ENCODE measurements at regions of chr5 and their contacts with region 1.

Region 1: DNA sequence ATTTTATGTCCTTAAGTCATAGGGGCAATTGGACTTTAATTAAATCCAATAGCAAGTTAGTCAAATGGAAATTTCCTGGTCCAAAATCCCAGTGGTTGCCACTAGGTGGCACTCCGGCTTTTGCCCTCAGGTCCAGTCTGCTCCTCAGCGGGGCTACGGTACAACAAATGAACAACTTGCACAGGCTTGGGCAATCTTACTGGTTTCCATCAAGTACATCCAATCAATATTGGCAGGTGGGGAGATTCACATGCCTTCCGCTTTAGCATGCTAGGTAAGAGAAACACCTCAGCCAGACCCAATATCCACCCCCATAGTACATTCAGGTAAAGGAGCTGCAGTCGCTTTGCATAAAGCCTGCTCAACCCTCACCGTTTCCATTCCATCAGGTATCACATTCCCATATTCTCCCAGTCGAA is 6.3 kb upstream of the MXD3 start:
- DNase-seq: peak; percentile 90
- ATAC-seq: peak; percentile 76
- H3K4me3 Mint-ChIP-seq: no peak overlapping the region
- H3K27ac Mint-ChIP-seq: no peak overlapping the region
- H3K4me1 Mint-ChIP-seq: peaks cover 20% of the 10 kb centered on the region
- H3K27me3 Mint-ChIP-seq: no peaks in the 10 kb centered on the region
- CTCF ChIP-seq: peak; percentile 94

Region 2: DNA sequence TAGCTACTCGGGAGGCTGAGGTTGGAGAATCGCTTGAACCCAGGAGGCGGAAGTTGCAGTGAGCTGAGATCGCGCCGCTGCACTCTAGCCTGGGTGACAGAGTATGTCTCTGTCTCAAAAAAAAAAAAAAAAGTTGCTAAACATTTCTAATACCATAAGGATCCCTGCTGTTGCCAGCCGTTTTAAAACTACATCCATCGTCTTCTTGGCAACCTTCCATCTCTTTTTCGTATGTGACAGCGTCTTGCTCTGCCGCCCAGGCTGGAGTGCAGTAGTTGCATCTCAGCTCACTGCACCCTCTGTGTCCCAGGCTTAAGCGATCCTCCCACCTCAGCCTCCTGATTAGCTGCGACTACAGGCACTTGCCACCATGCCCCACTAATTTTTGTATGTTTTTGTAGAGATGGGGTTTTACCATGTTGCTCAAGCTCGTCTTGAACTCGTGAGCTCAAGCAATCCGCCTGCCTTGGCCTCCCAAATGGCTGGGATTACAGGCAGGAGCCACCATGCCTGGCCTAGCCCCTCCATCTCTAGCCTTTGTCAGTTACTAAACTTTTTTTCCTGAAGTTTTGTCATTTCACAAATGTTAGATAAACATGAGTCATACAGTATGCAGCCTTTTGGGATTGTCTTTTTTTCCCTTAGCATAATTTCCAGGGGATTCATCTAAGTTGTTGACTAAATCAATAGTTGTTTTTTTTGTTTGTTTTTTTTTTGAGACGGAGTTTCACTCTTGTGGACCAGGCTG is 170.9 kb before region 1 on chr5:
- CTCF ChIA-PET with region 1: no interaction called
- POLR2A ChIA-PET with region 1: no interaction called
- intact Hi-C with region 1: no loop called
- DNase-seq: no peak
- ATAC-seq: no peak
- H3K4me3 Mint-ChIP-seq: no peak overlapping the region
- H3K27ac Mint-ChIP-seq: no peak overlapping the region
- H3K4me1 Mint-ChIP-seq: peaks cover 12% of the 10 kb centered on the region
- H3K27me3 Mint-ChIP-seq: no peaks in the 10 kb centered on the region
- CTCF ChIP-seq: no peak

Region 3: GRCh38 chr5:177290816-177291596 is 27.0 kb before region 1 on chr5:
- CTCF ChIA-PET with region 1: no interaction called
- POLR2A ChIA-PET with region 1: no interaction called
- intact Hi-C with region 1: no loop called
- DNase-seq: no peak
- ATAC-seq: no peak
- H3K4me3 Mint-ChIP-seq: no peak overlapping the region
- H3K27ac Mint-ChIP-seq: peak overlapping the region; percentile 32
- H3K4me1 Mint-ChIP-seq: peaks cover 11% of the 10 kb centered on the region
- H3K27me3 Mint-ChIP-seq: no peaks in the 10 kb centered on the region
- CTCF ChIP-seq: no peak

Region 4: DNA sequence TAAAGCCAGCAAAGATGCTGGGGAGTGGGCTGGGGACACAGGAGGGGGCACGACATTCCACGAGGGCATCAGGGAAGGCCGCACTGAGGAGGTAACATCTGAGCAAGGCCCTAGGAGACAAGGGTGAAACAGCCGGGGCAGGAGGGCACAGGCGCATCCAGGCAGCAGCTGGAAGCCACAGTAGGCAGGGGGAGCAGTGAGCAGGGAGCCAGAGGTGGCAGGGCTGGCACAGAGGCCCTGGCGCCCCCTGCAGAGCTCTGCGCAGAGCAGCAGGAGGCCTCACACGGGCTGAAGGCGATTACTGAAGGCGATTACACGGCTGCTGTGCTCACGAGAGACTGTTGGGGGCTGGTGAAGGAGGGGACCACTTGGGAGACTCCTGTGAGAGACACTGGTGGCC is 18.1 kb after region 1 on chr5:
- CTCF ChIA-PET with region 1: interaction called, 41 read pairs
- POLR2A ChIA-PET with region 1: interaction called, 5 read pairs
- intact Hi-C with region 1: no loop called
- DNase-seq: peak; percentile 62
- ATAC-seq: peak; percentile 92
- H3K4me3 Mint-ChIP-seq: no peak overlapping the region
- H3K27ac Mint-ChIP-seq: peak overlapping the region; percentile 24
- H3K4me1 Mint-ChIP-seq: peaks cover 12% of the 10 kb centered on the region
- H3K27me3 Mint-ChIP-seq: no peaks in the 10 kb centered on the region
- CTCF ChIP-seq: peak; percentile 64

Region 5: DNA sequence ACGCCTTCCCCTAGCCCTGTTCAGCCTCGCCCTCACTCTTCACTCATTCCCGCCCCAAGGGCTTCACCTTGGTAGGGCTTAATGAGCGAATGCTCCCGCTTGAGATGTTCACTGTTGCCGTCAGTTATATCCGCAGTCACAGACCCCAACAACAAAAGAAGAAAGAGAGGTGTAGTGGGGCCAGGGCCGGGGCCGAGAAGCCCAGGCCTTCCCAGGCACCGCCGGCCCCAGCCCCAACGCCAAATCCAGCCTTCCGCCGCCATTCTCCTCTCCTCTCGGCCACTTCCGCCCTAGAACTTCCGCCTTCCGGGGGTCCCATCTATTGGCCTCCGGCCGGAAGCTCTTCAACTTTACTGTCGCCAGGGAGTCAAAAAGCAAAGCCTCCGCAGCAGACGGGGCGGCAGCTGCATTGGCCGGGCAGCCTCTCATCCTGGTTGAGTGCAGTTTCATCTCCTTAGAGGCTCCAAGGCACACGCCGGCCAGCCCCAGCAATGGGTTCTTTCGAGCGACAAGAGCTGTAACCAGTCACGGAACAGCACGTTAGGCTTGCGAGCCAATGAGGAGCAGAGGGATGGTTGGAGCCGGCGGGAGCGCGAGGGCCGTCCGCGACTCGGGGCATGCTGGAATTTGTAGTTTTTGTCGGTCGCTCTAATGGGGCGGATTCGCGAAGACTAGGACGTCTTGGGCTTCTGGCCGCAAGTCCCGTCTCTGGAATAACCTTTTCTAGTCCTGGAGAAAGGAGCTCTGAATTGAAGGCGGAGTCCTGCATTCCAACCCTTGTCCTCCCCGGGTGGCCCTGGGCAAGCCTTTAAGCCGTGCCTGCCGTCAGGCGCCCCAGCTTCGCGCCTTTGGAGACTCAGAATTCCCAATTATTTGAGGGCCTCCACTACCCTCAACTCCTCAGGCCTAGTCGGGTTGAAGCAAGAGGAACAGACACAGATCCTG is 33.7 kb after region 1 on chr5 and contains the start of gene LMAN2:
- CTCF ChIA-PET with region 1: interaction called, 28 read pairs
- POLR2A ChIA-PET with region 1: interaction called, 15 read pairs
- intact Hi-C with region 1: loop called (anchors 5 kb)
- DNase-seq: peak; percentile 96
- ATAC-seq: peak; percentile 98
- H3K4me3 Mint-ChIP-seq: peak within 1 kb of the TSS; percentile 93
- H3K27ac Mint-ChIP-seq: peak within 1 kb of the TSS; percentile 100
- H3K4me1 Mint-ChIP-seq: peaks cover 54% of the 10 kb centered on the region
- H3K27me3 Mint-ChIP-seq: no peaks in the 10 kb centered on the region
- CTCF ChIP-seq: no peak
- total RNA-seq, gene LMAN2: 79.9 to 87.5 TPM

Region 6: GRCh38 chr5:177357459-177358351 is 39.7 kb after region 1 on chr5 and contains the start of gene RGS14:
- CTCF ChIA-PET with region 1: interaction called, 28 read pairs
- POLR2A ChIA-PET with region 1: interaction called, 15 read pairs
- intact Hi-C with region 1: loop called (anchors 5 kb)
- DNase-seq: peak; percentile 75
- ATAC-seq: peak; percentile 87
- H3K4me3 Mint-ChIP-seq: peak within 1 kb of the TSS; percentile 89
- H3K27ac Mint-ChIP-seq: peak within 1 kb of the TSS; percentile 84
- H3K4me1 Mint-ChIP-seq: peaks cover 75% of the 10 kb centered on the region
- H3K27me3 Mint-ChIP-seq: no peaks in the 10 kb centered on the region
- CTCF ChIP-seq: no peak
- total RNA-seq, gene RGS14: 50.4 to 52.5 TPM

Region 7: GRCh38 chr5:177370488-177371119 is 52.6 kb after region 1 on chr5:
- CTCF ChIA-PET with region 1: interaction called, 21 read pairs
- POLR2A ChIA-PET with region 1: no interaction called
- intact Hi-C with region 1: no loop called
- DNase-seq: peak; percentile 63
- ATAC-seq: peak; percentile 65
- H3K4me3 Mint-ChIP-seq: no peak overlapping the region
- H3K27ac Mint-ChIP-seq: no peak overlapping the region
- H3K4me1 Mint-ChIP-seq: peaks cover 58% of the 10 kb centered on the region
- H3K27me3 Mint-ChIP-seq: no peaks in the 10 kb centered on the region
- CTCF ChIP-seq: no peak

Region 8: GRCh38 chr5:177382423-177383029 is 64.6 kb after region 1 on chr5:
- CTCF ChIA-PET with region 1: interaction called, 13 read pairs
- POLR2A ChIA-PET with region 1: interaction called, 4 read pairs
- intact Hi-C with region 1: no loop called
- DNase-seq: peak; percentile 39
- ATAC-seq: no peak
- H3K4me3 Mint-ChIP-seq: no peak overlapping the region
- H3K27ac Mint-ChIP-seq: no peak overlapping the region
- H3K4me1 Mint-ChIP-seq: peaks cover 23% of the 10 kb centered on the region
- H3K27me3 Mint-ChIP-seq: no peaks in the 10 kb centered on the region
- CTCF ChIP-seq: peak; percentile 13

Region 9: DNA sequence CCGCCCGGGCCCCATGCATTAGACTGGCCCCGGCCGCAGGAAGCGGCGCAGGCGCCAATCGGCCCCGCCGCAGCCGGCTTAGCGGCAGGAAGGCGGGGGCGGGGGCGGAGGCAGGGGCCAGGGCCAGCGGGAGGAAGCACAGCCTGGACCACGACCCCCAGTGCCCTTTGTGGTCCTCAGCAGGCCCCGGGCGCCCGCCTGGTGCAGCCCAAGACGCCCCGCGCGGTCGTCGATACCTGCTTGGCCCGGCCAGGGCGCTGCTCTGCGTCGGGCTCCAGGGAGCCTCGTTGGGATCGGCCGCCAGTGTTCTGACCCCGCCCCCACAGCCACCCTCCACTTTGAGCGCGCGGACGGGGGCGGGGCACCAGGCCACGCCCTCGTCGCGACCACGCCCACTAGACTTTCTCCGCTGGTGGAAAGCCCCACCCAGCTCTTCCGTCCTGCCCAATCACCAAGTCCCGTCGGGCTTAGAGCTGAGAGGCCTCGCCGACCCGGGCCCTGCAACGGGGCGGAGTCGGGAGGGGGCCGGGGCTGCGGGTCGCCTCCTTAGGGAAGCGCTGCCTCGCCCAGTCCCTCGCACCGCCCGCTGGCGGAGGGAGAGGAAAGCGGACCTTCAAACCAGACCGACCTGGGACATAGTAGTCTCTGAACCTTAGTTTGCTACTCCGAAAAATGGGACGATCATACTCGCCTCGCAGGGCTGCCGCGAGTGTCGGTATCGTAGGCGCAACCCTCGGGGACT is 179.5 kb after region 1 on chr5 and contains the start of gene PDLIM7:
- CTCF ChIA-PET with region 1: interaction called, 10 read pairs
- POLR2A ChIA-PET with region 1: interaction called, 3 read pairs
- intact Hi-C with region 1: loop called (anchors 5 kb)
- DNase-seq: peak; percentile 97
- ATAC-seq: peak; percentile 82
- H3K4me3 Mint-ChIP-seq: peak within 1 kb of the TSS; percentile 79
- H3K27ac Mint-ChIP-seq: peak within 1 kb of the TSS; percentile 68
- H3K4me1 Mint-ChIP-seq: peaks cover 38% of the 10 kb centered on the region
- H3K27me3 Mint-ChIP-seq: peaks cover 11% of the 10 kb centered on the region
- CTCF ChIP-seq: no peak
- total RNA-seq, gene PDLIM7: 68.4 to 73.0 TPM

Measured in activated CD8-positive, alpha-beta T cell treated with anti-CD3 and anti-CD28 coated beads for 36 hours (primary cell).